Activated B cell treated with CpG ODN at 0.5 μM for 24 hours (primary cell): ENCODE measurements at regions of chr3 and their contacts with region 1.

Region 1: GRCh38 chr3:129824926-129825541 is 68.5 kb downstream of the TMCC1 start:
- DNase-seq: no peak
- ATAC-seq: peak; percentile 23
- H3K4me3 Mint-ChIP-seq: no peak overlapping the region
- H3K27ac Mint-ChIP-seq: peak overlapping the region; percentile 2
- H3K4me1 Mint-ChIP-seq: peaks cover 50% of the 10 kb centered on the region
- H3K27me3 Mint-ChIP-seq: no peaks in the 10 kb centered on the region
- CTCF ChIP-seq: peak; percentile 78

Region 2: GRCh38 chr3:129383292-129383860 is 441.7 kb before region 1 on chr3:
- CTCF ChIA-PET with region 1: interaction called, 9 read pairs
- POLR2A ChIA-PET with region 1: no interaction called
- intact Hi-C with region 1: loop called (anchors 1 kb)
- DNase-seq: peak; percentile 26
- ATAC-seq: peak; percentile 98
- H3K4me3 Mint-ChIP-seq: no peak overlapping the region
- H3K27ac Mint-ChIP-seq: no peak overlapping the region
- H3K4me1 Mint-ChIP-seq: no peaks in the 10 kb centered on the region
- H3K27me3 Mint-ChIP-seq: no peaks in the 10 kb centered on the region
- CTCF ChIP-seq: peak; percentile 23

Region 3: GRCh38 chr3:129650256-129650872 is 174.7 kb before region 1 on chr3:
- CTCF ChIA-PET with region 1: interaction called, 16 read pairs
- POLR2A ChIA-PET with region 1: no interaction called
- intact Hi-C with region 1: loop called (anchors 1 kb)
- DNase-seq: no peak
- ATAC-seq: peak; percentile 47
- H3K4me3 Mint-ChIP-seq: no peak overlapping the region
- H3K27ac Mint-ChIP-seq: no peak overlapping the region
- H3K4me1 Mint-ChIP-seq: peaks cover 2% of the 10 kb centered on the region
- H3K27me3 Mint-ChIP-seq: no peaks in the 10 kb centered on the region
- CTCF ChIP-seq: no peak

Region 4: DNA sequence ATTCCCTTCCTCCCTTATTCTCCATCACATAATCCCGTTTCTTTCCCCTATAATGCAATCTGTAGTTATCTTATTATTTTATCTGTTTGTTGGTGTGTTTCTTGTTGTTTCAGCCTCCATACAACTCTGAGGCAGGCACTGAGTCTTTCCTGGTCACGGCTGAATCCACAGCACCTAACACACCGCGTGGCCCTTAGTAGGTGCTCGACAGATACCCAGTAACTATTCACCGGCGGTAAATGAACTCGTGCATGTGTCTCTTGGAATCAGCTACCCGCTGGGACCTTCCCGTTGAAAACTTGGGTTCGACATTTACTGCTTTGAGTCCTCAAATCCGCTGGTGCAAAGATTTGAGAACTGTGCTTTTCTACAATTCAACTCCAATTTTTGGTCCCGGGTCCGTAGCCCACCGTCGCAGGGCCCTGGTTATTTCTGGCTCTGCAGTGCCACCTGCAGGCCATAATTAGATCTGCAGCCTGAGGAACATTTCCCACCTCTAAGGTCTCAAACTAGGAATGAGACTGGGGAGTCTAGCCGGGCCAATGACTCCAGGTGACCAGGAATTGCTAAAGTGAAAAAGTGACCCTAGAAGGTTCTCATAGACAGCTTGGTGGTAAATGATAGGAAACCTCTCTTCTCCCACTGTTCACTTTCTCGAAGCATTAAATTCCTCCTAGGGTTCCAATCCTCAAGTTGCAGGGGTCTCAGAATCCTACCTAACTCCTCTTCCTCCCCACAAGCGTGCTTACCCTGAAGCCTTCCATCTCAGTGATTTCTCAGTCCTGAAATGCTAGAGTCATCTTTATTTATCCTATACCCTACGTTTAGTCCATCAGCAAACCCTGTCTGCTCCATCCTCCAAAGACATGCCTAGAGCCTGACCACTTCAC is 109.4 kb after region 1 on chr3:
- CTCF ChIA-PET with region 1: no interaction called
- POLR2A ChIA-PET with region 1: interaction called, 7 read pairs
- intact Hi-C with region 1: loop called (anchors 2 kb)
- DNase-seq: peak; percentile 20
- ATAC-seq: peak; percentile 64
- H3K4me3 Mint-ChIP-seq: no peak overlapping the region
- H3K27ac Mint-ChIP-seq: no peak overlapping the region
- H3K4me1 Mint-ChIP-seq: peaks cover 8% of the 10 kb centered on the region
- H3K27me3 Mint-ChIP-seq: peaks cover 4% of the 10 kb centered on the region
- CTCF ChIP-seq: peak; percentile 81